Calu3 (cell line): ENCODE measurements at regions of chr5 and their contacts with region 1.

Region 1: DNA sequence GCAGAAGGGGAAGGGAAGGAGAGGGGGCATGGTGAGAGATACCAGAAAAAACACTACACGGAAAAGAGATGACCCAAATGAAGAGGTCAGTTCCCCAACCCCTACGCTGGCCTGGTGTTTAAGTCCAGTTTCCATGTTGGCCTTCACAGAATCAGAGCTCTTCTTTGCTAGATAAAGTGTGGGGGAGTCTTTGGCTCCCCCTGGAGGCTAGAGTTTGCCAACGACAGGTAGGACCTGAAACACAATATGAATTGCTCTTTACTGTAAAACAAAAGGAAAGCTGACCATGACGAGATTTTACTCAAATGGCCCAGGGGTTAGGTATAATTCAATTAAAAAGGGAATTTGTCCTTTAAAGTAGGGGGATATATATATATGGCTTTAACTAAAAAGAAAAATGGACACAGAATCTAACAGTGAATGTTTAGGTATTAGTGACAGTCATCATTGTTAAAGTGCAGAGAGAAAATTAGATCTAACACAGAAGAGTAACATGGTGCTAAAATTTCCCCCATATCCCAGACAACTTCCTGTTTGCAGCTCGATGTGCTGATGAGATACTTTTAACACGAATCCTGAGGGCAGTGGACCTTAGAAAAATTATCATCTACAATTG is 92.0 kb downstream of the SV2C start:
- DNase-seq: peak; percentile 72
- H3K4me3 Mint-ChIP-seq: no peak overlapping the region
- H3K27ac Mint-ChIP-seq: no peak overlapping the region
- H3K4me1 Mint-ChIP-seq: no peaks in the 10 kb centered on the region
- H3K27me3 Mint-ChIP-seq: no peaks in the 10 kb centered on the region
- CTCF ChIP-seq: peak; percentile 71

Region 2: DNA sequence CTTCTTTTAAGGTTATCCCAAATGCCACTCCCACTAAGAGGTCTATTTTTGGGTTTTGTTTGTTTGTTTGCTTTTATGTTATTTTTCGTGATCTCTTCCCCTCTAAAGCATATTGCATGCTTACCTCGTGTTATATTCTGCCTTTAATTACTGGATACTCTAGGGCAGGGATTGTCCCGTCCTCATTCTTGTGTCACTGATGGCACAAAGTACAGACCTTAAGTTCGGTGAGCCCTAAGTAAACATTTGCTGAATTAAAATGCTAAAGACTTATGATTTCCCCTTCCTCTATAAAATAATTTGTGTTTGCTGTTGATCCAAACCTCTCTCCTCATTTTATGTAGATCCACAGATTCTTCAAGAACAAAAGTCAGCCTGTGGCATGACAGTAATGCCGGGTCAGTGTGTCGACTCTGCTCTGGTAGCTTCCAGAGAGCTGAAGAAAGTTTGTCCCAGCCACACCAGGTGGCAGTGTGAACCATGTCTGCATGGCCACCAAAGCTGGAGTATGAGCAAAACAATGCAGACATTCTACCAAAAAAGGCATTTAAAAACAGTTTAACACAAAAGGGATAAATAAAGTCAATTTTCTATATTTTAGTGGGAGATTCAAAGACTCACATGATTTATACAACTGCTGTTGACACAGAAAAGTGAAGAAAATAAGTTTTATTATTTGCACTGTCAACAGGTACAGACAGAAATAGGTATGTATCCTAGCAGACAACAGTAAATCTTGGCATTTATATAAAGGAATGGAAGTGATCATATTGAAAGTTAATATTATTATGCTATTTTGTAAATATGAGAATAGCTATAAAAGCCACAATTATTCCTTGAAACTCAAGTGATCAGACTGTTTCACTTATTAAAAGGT is 440.0 kb before region 1 on chr5:
- CTCF ChIA-PET with region 1: interaction called, 16 read pairs
- intact Hi-C with region 1: loop called (anchors 5 kb)
- DNase-seq: peak; percentile 68
- H3K4me3 Mint-ChIP-seq: no peak overlapping the region
- H3K27ac Mint-ChIP-seq: no peak overlapping the region
- H3K4me1 Mint-ChIP-seq: peaks cover 12% of the 10 kb centered on the region
- H3K27me3 Mint-ChIP-seq: peaks cover 13% of the 10 kb centered on the region
- CTCF ChIP-seq: peak; percentile 64

Region 3: GRCh38 chr5:75885849-75886598 is 289.1 kb before region 1 on chr5:
- CTCF ChIA-PET with region 1: interaction called, 10 read pairs
- intact Hi-C with region 1: no loop called
- DNase-seq: peak; percentile 28
- H3K4me3 Mint-ChIP-seq: no peak overlapping the region
- H3K27ac Mint-ChIP-seq: no peak overlapping the region
- H3K4me1 Mint-ChIP-seq: no peaks in the 10 kb centered on the region
- H3K27me3 Mint-ChIP-seq: peaks cover 2% of the 10 kb centered on the region
- CTCF ChIP-seq: no peak

Region 4: DNA sequence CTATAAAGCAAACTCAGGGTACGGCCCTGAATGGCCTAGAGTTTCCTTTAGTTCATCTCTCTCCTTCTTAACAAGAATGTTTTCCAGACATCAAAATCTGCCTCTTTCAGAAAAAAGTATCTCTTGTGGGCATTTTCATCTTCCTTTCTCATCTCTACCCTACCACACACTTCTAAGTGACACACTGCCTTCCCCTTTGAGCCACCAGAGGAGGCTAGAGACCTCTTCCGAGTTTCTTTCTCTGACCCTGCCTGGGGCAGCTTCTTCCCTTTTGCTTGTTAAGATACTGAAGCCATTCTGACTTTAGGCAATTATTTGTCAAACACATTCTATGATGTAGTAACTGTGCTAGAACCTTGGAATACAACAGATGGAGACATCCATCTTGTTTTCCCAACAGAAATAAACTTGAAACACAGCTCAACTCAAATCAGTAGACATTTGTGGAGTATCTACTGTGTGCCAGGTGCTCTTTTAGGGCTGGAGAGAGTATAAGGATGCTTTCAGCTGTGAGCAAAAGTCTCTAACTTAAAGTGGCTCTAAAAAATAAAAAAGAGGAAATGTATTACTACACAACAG is 100.6 kb before region 1 on chr5:
- CTCF ChIA-PET with region 1: interaction called, 24 read pairs
- intact Hi-C with region 1: loop called (anchors 1 kb)
- DNase-seq: peak; percentile 45
- H3K4me3 Mint-ChIP-seq: no peak overlapping the region
- H3K27ac Mint-ChIP-seq: no peak overlapping the region
- H3K4me1 Mint-ChIP-seq: no peaks in the 10 kb centered on the region
- H3K27me3 Mint-ChIP-seq: peaks cover 95% of the 10 kb centered on the region
- CTCF ChIP-seq: peak; percentile 72